Panc1 (cell line): ENCODE measurements at regions of chr11 and their contacts with region 1.

Region 1: DNA sequence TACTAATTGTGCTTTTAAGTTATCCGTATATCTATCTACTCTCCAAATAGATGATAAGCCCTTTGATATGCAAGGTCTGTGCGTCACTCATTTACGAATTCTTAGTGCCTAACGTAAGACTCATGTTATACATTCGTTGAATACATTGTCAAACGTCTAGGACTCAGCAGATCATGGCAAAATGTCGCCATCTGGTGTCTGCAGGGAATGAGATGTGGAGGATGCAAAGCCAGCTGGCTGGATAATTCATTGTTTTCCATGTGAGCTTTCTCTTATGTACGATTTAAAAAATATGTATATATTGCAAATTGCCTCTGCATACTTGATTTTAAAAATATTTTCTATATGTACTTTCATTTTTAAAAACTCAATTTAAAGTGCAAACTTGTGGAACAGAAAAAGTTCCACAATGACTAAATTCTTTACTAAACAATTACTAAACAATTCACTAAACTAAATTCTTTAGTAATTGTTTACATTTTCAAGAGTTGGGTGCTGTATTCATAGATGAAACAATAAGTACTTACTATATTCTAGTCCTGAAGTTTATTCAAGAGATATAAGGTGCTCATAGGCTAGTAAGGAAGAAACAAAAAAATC is 33.8 kb downstream of the ZNF202 start:
- DNase-seq: peak; percentile 64
- ATAC-seq: peak; percentile 90
- H3K4me3 ChIP-seq: no peak overlapping the region
- H3K27ac ChIP-seq: no peak overlapping the region
- H3K4me1 ChIP-seq: no peaks in the 10 kb centered on the region
- H3K27me3 ChIP-seq: peaks cover 3% of the 10 kb centered on the region; the same call in 1 of the 2 replicates
- CTCF ChIP-seq: peak; percentile 86

Region 2: GRCh38 chr11:123261345-123262106 is 446.2 kb before region 1 on chr11:
- CTCF ChIA-PET with region 1: interaction called, 10 read pairs
- POLR2A ChIA-PET with region 1: no interaction called
- in situ Hi-C with region 1: no loop called
- intact Hi-C with region 1: no loop called
- DNase-seq: peak; percentile 13
- ATAC-seq: peak; percentile 97
- H3K4me3 ChIP-seq: peak overlapping the region; percentile 21 to 60
- H3K27ac ChIP-seq: 0 out of 2 replicates have a peak overlapping the region, but pooled peaks have one; percentile 34
- H3K4me1 ChIP-seq: peaks cover 7% of the 10 kb centered on the region; the same call in 1 of the 2 replicates
- H3K27me3 ChIP-seq: peaks cover 10% of the 10 kb centered on the region; the same call in 1 of the 2 replicates
- CTCF ChIP-seq: peak; percentile 99

Region 3: DNA sequence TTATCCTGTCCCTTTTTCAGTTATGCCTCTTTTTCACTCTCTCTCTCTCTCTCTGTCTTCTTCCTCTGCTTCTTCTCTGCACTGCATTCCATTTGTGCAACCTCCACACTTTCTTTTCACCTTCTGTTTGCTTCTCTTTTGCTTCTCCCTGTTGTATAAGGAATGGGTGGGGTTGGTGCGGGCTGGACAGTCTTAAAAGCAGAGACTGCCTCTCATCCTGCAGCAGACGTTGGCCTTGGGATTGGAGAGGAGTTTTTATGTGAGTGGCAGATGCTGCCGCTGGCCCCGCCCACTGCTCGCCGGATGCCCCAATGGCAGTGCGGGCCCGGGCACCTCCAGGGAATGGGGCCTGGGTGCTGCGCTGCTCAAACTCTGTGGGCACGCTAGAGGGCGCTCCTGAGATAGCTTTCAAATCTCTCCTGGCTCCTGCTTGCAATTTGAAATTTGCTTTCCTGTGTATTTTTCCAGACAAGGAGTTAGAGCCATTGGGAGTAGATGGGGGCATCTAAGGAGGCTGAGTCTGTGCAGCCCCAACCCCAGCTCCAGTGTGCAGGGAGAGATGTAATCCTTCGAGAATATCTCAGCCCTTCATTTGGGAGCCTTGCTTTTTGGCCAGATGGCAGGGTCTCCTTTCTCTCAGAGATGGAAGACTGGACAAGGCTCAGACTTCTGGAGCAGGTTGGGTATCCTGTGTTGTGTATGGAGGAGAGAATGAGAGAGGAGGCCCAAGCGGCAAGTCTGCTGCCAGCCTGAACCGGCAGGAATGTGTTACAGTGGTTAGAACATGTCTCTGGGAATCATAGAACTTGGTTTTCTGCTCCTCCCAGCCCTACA is 196.5 kb before region 1 on chr11:
- CTCF ChIA-PET with region 1: no interaction called
- POLR2A ChIA-PET with region 1: no interaction called
- in situ Hi-C with region 1: no loop called
- intact Hi-C with region 1: loop called (anchors 2 kb)
- DNase-seq: peak; percentile 45
- ATAC-seq: peak; percentile 99
- H3K4me3 ChIP-seq: no peak overlapping the region
- H3K27ac ChIP-seq: no peak overlapping the region
- H3K4me1 ChIP-seq: peaks cover 3% of the 10 kb centered on the region; the same call in 1 of the 2 replicates
- H3K27me3 ChIP-seq: peaks cover 13% of the 10 kb centered on the region
- CTCF ChIP-seq: peak; percentile 98

Region 4: DNA sequence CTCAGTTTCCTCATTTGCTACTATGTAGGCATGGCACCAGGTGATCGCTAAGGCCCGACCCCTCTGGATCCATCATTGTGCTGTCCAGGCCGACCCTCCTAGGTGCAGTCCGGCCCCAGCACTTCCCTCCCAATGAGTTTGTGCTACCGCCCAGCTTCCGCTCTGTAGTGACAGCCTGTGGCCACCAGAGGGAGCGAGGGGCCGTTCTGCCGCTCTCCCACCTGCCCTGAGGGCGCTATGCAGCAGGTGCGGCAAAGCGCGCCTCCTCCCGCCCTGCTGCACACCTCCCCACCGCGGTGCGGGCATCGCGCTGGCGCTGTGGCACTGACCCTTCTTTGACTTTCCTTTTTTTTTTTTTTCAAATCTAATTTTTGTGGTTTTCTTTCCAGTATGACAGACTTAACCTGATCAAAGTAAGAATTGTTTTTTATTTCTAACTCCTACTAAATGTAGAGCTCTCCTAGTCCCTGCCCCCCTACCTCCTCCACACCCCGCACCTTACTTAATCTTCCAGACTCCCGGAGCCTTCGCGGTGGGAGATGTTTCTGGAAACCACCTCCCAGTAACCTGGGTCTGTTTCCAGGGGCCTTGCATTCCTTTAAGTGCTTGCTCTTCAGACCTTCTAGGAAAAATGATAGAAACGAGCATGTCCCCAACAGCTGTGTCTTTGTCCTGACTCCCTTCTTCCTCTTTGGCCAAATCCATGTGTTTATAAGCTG is 127.0 kb before region 1 on chr11:
- CTCF ChIA-PET with region 1: interaction called, 20 read pairs
- POLR2A ChIA-PET with region 1: no interaction called
- in situ Hi-C with region 1: no loop called
- intact Hi-C with region 1: loop called (anchors 1 kb)
- DNase-seq: peak; percentile 32
- ATAC-seq: peak; percentile 83
- H3K4me3 ChIP-seq: no peak overlapping the region
- H3K27ac ChIP-seq: no peak overlapping the region
- H3K4me1 ChIP-seq: no peaks in the 10 kb centered on the region
- H3K27me3 ChIP-seq: peaks cover 17% of the 10 kb centered on the region
- CTCF ChIP-seq: peak; percentile 99

Region 5: DNA sequence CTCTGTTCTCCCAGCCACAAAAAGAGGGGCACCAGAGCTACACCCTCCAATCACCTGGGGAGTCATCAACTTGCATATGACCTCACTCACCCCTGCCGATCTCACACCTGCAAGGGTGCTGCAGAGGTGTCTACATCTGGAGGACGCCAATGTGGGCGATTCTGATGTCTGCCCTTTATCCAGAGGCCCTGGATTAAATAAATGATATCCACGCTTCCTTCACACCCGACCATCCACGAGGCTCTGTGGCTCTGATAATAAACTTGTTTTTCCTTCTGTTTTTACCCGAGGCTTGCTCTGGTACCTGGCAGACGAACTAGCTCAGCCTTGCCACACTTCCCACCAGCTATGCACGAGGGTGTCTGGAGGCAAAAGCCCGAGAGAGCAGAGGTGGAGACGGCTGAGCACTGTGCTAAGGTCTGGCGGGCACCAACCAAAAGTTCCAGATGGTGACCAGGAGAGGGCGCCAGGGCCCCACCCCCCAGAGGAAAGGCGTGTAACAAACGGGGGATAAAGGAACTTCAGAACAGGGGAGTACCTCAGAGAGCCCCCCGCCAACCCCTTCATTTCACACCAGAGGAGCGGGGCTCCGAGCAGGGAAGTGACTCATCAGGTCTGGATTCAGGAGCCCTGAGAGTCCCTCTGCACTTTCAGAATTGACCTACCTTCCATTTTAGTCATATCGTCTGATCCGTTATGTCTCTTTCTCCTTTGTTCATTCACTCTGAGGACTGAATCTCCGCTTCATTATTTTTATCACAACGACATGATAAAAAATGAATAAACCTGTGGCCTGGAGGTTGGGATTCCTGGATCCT is 66.8 kb before region 1 on chr11:
- CTCF ChIA-PET with region 1: interaction called, 11 read pairs
- POLR2A ChIA-PET with region 1: no interaction called
- in situ Hi-C with region 1: no loop called
- intact Hi-C with region 1: loop called (anchors 1 kb)
- DNase-seq: peak; percentile 20
- ATAC-seq: peak; percentile 95
- H3K4me3 ChIP-seq: no peak overlapping the region
- H3K27ac ChIP-seq: no peak overlapping the region
- H3K4me1 ChIP-seq: no peaks in the 10 kb centered on the region
- H3K27me3 ChIP-seq: peaks cover 10% of the 10 kb centered on the region; the same call in 1 of the 2 replicates
- CTCF ChIP-seq: peak; percentile 97